HCT116 (cell line): ENCODE measurements at regions of chr1 and their contacts with region 1.

Region 1: DNA sequence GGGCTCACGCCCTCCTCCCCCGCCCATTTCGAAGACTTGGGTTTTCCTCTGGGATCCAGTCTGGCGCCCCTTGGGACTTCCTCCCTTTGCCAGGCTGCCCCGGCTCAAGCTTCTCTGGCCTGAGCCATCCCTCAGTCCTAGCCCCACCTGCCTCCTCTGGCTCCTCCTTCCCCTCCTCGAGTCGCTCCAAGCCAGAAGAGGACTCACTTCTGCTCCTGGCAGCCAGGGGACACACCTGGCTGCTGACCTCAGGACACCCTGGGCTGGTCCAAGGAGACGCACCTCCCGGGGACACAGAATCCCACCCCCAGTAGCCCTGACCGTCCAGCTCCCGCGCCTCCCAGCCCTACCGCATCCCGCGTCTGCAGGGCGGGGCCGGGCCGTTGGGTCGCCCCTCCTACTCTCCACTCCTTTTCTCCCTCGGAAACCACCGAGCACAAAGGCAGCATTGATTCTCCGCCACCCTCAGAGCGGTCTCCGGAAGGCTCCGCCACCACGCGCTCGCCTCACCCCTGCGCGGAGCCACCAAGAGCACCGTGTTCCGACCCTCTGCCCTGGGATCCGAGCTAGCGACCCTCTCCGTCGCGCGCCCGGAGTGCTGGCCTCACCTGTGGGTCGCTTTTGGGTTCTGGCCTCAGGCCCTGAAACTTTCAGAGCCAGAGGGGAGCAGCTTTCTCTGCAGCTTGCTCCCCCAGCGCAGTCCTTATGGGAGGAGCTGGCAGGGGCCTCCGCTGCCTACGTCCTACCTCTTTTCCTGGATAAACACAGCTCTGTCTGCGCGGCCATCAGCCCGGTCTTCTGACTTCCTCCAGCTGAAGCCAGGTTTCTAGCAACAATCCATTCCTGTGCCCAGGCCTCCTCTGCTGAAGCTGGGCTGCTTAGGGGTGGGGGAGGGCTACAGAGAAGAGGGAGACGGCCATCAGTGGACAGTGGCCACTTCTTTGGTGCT is at the start of gene C2CD4D:
- DNase-seq: peak; percentile 27
- ATAC-seq: peak; percentile 73
- H3K4me3 ChIP-seq: peak within 1 kb of the TSS; percentile 31 to 51
- H3K27ac ChIP-seq: peak within 1 kb of the TSS; percentile 32; the same call in 1 of the 2 replicates
- H3K4me1 ChIP-seq: peaks cover 0 to 45% of the 10 kb centered on the region in 2 experiments; a peak in 2 of 4 replicates
- H3K27me3 ChIP-seq: no peaks in the 10 kb centered on the region
- CTCF ChIP-seq: no peak
- POLR2A ChIP-seq: no peak
- RAD21 ChIP-seq: no peak
- total RNA-seq, gene C2CD4D: 0.17 TPM

Region 2: DNA sequence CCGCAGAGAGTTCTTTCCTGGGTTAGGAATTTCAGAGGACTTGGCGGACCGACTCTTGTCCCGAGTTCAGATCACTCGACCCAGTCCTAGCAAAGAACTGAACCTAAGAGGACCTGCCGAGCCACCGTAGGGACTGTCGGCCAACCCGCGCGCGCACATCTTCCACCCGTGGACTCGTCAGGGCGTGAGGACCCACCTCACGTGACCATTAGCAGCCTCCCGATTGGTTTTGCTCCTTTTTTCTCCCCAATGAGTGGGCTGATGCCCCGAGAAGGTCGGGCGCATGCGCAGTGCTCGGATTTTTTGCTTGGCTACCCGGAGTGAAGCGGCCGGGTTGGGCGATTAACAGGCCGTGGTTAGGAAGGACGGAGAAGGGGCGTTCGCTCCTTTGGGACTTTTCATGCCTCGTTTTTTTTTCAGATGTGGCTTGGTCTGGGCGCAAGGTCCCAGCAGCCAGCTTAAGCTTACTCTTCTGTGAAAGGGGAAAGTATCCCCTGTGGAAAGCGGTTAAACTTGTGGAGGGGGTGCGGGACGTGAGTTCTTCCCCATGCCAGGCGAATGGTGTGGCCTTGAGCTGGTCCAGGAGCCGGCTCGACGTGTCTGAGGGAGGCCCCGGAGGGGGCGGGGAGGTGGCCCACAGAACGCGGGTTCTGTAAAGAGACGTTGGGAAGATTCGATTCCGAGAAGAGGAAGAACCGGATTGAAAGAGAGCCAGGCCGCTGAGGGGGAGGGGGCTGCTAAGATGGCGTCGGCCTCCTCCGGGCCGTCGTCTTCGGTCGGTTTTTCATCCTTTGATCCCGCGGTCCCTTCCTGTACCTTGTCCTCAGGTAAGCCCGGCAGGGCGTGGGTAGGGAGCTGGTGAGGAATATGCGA is 641.2 kb before region 1 on chr1 and contains the start of gene PIP5K1A:
- CTCF ChIA-PET with region 1: interaction called, 5 read pairs
- POLR2A ChIA-PET with region 1: no interaction called
- RAD21 ChIA-PET with region 1: no interaction called
- intact Hi-C with region 1: loop called (anchors 5 kb)
- DNase-seq: peak; percentile 95
- ATAC-seq: peak; percentile 73
- H3K4me3 ChIP-seq: peak within 1 kb of the TSS; percentile 79 to 90
- H3K27ac ChIP-seq: peak within 1 kb of the TSS; percentile 83
- H3K4me1 ChIP-seq: peaks cover 26 to 40% of the 10 kb centered on the region in 2 experiments
- H3K27me3 ChIP-seq: no peaks in the 10 kb centered on the region
- CTCF ChIP-seq: no peak
- POLR2A ChIP-seq: peak; percentile 63
- RAD21 ChIP-seq: no peak
- total RNA-seq, gene PIP5K1A: 75.4 TPM

Region 3: GRCh38 chr1:151443846-151444782 is 395.6 kb before region 1 on chr1:
- CTCF ChIA-PET with region 1: interaction called, 4 read pairs
- POLR2A ChIA-PET with region 1: no interaction called
- RAD21 ChIA-PET with region 1: no interaction called
- intact Hi-C with region 1: loop called (anchors 5 kb)
- DNase-seq: peak; percentile 76
- ATAC-seq: peak; percentile 99
- H3K4me3 ChIP-seq: no peak overlapping the region
- H3K27ac ChIP-seq: peak overlapping the region; percentile 16; the same call in 1 of the 2 replicates
- H3K4me1 ChIP-seq: peaks cover 11 to 13% of the 10 kb centered on the region in 2 experiments
- H3K27me3 ChIP-seq: no peaks in the 10 kb centered on the region
- CTCF ChIP-seq: peak; percentile 79 to 84 (median 83); a peak in 5 of 6 replicates
- POLR2A ChIP-seq: no peak
- RAD21 ChIP-seq: peak; percentile 89

Region 4: DNA sequence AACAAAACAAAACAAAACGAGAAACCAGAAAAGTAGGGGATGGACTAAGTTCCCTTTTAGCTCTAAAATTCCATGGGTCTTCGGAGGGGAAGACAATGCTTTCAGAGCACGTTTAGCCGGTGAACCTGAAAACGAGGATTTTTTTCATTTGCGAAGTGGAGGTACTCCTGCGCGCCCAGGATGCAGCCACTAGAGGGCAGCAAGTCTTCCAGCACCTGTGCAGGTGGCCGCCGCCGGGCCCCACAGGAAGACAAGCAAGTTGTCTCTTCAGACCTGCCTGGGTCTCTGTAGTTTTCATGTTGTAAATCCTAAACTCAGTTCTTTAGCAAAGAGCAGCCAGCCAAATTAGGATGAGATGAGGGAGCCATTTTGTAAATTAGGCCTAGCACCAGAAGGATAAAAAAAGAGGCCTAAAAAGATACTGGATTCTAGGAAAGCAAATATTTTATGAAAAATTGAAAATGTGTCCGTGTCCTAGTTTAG is 245.5 kb before region 1 on chr1:
- CTCF ChIA-PET with region 1: interaction called, 12 read pairs
- POLR2A ChIA-PET with region 1: no interaction called
- RAD21 ChIA-PET with region 1: no interaction called
- intact Hi-C with region 1: loop called (anchors 1 kb)
- DNase-seq: peak; percentile 77
- ATAC-seq: peak; percentile 97
- H3K4me3 ChIP-seq: no peak overlapping the region
- H3K27ac ChIP-seq: no peak overlapping the region
- H3K4me1 ChIP-seq: peaks cover 3 to 13% of the 10 kb centered on the region in 2 experiments; a peak in 3 of 4 replicates
- H3K27me3 ChIP-seq: no peaks in the 10 kb centered on the region
- CTCF ChIP-seq: peak; percentile 90 to 97 (median 91)
- POLR2A ChIP-seq: no peak
- RAD21 ChIP-seq: peak; percentile 92

Region 5: GRCh38 chr1:151739590-151740375 is 99.9 kb before region 1 on chr1:
- CTCF ChIA-PET with region 1: interaction called, 7 read pairs
- POLR2A ChIA-PET with region 1: no interaction called
- RAD21 ChIA-PET with region 1: interaction called in 1 of 2 experiments, 4 read pairs
- intact Hi-C with region 1: loop called (anchors 1 kb)
- DNase-seq: no peak
- ATAC-seq: no peak; the same call in 1 of the 2 replicates
- H3K4me3 ChIP-seq: no peak overlapping the region
- H3K27ac ChIP-seq: no peak overlapping the region
- H3K4me1 ChIP-seq: peaks cover 6 to 10% of the 10 kb centered on the region in 2 experiments; a peak in 2 of 4 replicates
- H3K27me3 ChIP-seq: no peaks in the 10 kb centered on the region
- CTCF ChIP-seq: no peak
- POLR2A ChIP-seq: no peak
- RAD21 ChIP-seq: peak; percentile 23; the same call in 1 of the 2 replicates